A549 (cell line): ENCODE measurements at regions of chr14 and their contacts with region 1.

Region 1: DNA sequence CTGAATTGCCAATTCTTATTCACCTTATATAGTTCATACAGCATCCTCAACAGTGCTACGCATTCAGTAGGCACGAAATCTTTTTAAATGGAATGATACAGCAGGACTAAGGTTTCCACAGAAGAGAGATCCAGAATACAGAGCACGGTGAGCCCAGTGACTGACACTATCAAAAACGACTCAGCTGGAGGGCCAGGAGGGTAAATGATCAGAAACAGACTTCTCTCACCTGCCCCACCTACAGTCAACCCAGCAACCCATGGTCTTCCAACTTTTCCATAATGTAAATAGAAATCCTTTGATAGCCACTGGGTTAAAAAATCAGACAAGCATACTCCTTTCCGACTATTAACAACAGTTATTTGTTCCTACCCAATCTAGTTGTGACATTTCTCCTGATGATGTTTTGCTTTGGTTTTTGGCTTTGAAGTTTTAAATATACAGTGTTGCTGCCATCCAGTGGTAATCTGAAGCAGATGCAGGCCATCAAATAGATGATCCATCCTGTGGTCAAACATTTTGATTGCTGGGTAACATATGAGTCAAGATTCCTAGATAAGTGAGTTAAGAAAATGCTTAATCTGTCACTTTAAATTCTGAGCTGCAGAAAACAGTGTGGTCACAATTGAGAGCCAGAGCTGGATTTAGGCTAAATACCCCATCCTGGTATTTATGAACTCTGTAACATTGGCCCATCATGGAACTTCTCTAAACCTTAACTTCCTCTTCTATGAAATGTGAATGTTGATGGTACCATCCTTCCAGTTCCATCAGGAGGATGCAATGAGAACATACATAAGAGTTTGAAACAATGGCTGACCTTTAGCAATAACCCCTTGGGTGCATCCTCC is 42.0 kb downstream of the GPHB5 start:
- DNase-seq: peak; percentile 36 to 43
- ATAC-seq: peak; percentile 75 to 77; a peak in 5 of 6 replicates
- H3K4me3 ChIP-seq: no peak overlapping the region
- H3K27ac ChIP-seq: no peak overlapping the region
- H3K4me1 ChIP-seq: no peaks in the 10 kb centered on the region
- CTCF ChIP-seq: peak; percentile 89
- EP300 ChIP-seq: no peak
- POLR2A ChIP-seq: no peak
- RAD21 ChIP-seq: peak; percentile 85 to 86

Region 2: GRCh38 chr14:62162998-62163589 is 1113.6 kb before region 1 on chr14:
- CTCF ChIA-PET with region 1: interaction called, 58 read pairs
- POLR2A ChIA-PET with region 1: no interaction called
- DNase-seq: peak; percentile 23 to 35
- ATAC-seq: peak; percentile 77 to 90; a peak in 5 of 6 replicates
- H3K4me3 ChIP-seq: no peak overlapping the region
- H3K27ac ChIP-seq: no peak overlapping the region
- H3K4me1 ChIP-seq: no peaks in the 10 kb centered on the region
- CTCF ChIP-seq: peak; percentile 81
- EP300 ChIP-seq: no peak
- POLR2A ChIP-seq: no peak
- RAD21 ChIP-seq: peak; percentile 85 to 86

Region 3: GRCh38 chr14:62179367-62180018 is 1097.2 kb before region 1 on chr14:
- CTCF ChIA-PET with region 1: interaction called, 39 read pairs
- POLR2A ChIA-PET with region 1: no interaction called
- DNase-seq: peak; percentile 26 to 72
- ATAC-seq: peak; percentile 88 to 90
- H3K4me3 ChIP-seq: no peak overlapping the region
- H3K27ac ChIP-seq: no peak overlapping the region
- H3K4me1 ChIP-seq: no peaks in the 10 kb centered on the region
- CTCF ChIP-seq: peak; percentile 69
- EP300 ChIP-seq: no peak
- POLR2A ChIP-seq: no peak
- RAD21 ChIP-seq: peak; percentile 82 to 86

Region 4: DNA sequence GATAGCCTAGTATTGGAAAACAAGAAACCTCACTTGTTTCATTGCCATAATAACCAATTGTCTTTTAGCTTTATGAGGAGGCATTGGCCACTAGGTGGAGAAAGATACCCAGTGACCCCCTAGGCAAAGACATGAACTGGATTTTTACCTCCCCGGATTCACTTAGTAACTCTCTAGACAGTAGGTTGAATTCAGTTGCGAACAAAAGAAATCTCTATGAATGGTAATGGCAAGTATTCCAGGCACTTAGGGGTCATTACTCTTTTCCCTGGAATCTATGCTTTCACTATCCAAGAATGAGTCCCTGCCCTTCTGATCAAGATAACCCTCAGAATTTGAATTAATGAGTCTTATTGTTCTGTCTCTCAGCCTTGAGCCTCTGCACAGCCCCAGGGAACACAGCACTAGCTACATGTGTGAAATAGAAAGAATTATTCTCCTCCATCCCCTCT is 101.9 kb before region 1 on chr14:
- CTCF ChIA-PET with region 1: interaction called, 26 read pairs
- POLR2A ChIA-PET with region 1: no interaction called
- DNase-seq: peak; percentile 25 to 34
- ATAC-seq: peak in 1 of 2 experiments; percentile 70; a peak in 3 of 6 replicates
- H3K4me3 ChIP-seq: no peak overlapping the region
- H3K27ac ChIP-seq: no peak overlapping the region
- H3K4me1 ChIP-seq: no peaks in the 10 kb centered on the region
- CTCF ChIP-seq: peak; percentile 44
- EP300 ChIP-seq: no peak
- POLR2A ChIP-seq: no peak
- RAD21 ChIP-seq: peak; percentile 44 to 63; a peak in 4 of 5 replicates

Region 5: GRCh38 chr14:63262446-63262845 is 14.3 kb before region 1 on chr14:
- CTCF ChIA-PET with region 1: interaction called, 20 read pairs
- POLR2A ChIA-PET with region 1: no interaction called
- DNase-seq: no peak
- ATAC-seq: no peak
- H3K4me3 ChIP-seq: no peak overlapping the region
- H3K27ac ChIP-seq: no peak overlapping the region
- H3K4me1 ChIP-seq: no peaks in the 10 kb centered on the region
- CTCF ChIP-seq: no peak
- EP300 ChIP-seq: no peak
- POLR2A ChIP-seq: no peak
- RAD21 ChIP-seq: no peak